ENCODE measurements at regions of chr7 and their contacts with region 1.

Region 1: DNA sequence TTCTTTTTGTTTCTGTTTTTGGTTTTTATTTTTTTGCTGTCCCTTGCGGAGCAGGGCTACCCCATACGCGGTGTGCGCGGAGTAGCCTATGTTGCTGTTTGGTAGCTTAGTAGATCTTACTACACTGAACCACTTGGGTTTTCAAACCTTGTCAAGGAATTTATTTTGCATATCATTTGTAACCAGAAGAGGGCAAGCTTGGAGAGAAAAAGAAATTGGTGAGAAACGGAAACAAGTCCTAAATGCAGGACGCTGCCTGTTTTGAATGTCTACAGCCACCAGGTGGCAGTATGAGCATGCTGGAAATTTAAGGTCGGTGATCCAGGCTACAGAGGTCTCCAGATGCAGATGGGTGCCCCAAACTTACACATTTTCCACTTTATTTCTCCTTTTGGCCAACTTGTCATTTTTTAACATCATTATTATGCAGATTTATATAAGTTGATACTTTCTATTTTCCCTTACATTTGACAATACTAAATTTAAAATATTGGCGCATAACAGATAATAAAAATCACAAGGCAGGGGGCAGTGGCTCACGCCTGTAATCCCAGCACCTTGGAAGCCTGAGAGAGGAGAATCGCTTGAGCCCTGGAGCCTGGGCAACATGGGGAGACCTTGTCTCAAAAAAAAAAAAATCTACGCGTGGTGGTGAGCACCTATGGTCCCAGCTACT is 15.3 kb upstream of the TRA2A start:
- DNase-seq: peak; percentile 83
- H3K4me3 ChIP-seq: no peak overlapping the region
- H3K27ac ChIP-seq: no peak overlapping the region
- H3K4me1 ChIP-seq: no peaks in the 10 kb centered on the region
- H3K27me3 ChIP-seq: no peaks in the 10 kb centered on the region; the same call in 1 of the 2 replicates
- CTCF ChIP-seq: peak; percentile 100
- EP300 ChIP-seq: no peak
- RAD21 ChIP-seq: peak; percentile 97

Region 2: DNA sequence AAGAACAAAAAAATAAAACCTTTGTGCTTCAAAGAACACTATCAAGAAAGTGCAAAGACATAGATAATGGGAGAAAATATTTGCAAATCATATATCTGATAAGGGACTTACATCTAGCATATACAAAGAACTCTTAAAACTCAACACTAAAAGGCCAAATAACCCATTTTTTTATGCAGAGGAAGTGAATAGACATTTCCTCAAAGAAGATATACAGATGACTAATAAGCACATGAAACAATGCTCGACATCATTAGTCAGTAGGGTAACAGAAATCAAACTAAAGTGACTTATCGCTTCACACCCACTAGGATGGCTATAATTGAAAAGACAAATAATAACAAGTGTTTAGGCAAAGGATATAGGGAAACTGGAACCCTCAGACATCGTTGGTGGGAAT is 169.9 kb before region 1 on chr7:
- CTCF ChIA-PET with region 1: no interaction called
- POLR2A ChIA-PET with region 1: no interaction called
- DNase-seq: no peak
- H3K4me3 ChIP-seq: no peak overlapping the region
- H3K27ac ChIP-seq: peak overlapping the region in 1 of 2 experiments; percentile 9; a peak in 1 of 4 replicates
- H3K4me1 ChIP-seq: peaks cover 3 to 27% of the 10 kb centered on the region in 2 experiments; a peak in 3 of 4 replicates
- H3K27me3 ChIP-seq: no peaks in the 10 kb centered on the region
- CTCF ChIP-seq: no peak
- EP300 ChIP-seq: no peak
- RAD21 ChIP-seq: no peak

Region 3: DNA sequence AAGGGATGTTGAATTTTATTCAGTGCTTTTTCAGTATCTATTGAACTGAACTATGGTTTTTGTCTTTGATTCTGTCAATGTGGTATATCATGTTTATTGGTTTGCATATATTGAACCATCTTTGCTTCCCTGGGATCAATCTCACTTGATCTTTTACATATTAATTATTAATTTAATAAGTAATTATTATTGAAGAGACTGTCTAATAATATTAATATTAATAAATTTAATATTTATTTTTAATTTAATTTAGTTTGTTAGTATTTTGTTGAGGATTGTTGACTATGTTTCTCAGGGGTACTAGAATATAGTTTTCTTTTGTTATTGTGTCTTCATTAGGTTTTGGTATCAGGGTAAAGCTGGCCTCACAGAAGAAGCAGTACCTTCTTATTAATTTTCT is 11.3 kb after region 1 on chr7:
- CTCF ChIA-PET with region 1: interaction called, 19 read pairs
- POLR2A ChIA-PET with region 1: no interaction called
- DNase-seq: no peak
- H3K4me3 ChIP-seq: no peak overlapping the region
- H3K27ac ChIP-seq: no peak overlapping the region
- H3K4me1 ChIP-seq: no peaks in the 10 kb centered on the region
- H3K27me3 ChIP-seq: no peaks in the 10 kb centered on the region; the same call in 1 of the 2 replicates
- CTCF ChIP-seq: no peak
- EP300 ChIP-seq: no peak
- RAD21 ChIP-seq: no peak

Region 4: GRCh38 chr7:23586159-23586558 is 39.1 kb after region 1 on chr7:
- CTCF ChIA-PET with region 1: interaction called, 10 read pairs
- POLR2A ChIA-PET with region 1: no interaction called
- DNase-seq: no peak
- H3K4me3 ChIP-seq: no peak overlapping the region
- H3K27ac ChIP-seq: no peak overlapping the region
- H3K4me1 ChIP-seq: no peaks in the 10 kb centered on the region
- H3K27me3 ChIP-seq: no peaks in the 10 kb centered on the region; the same call in 1 of the 2 replicates
- CTCF ChIP-seq: no peak
- EP300 ChIP-seq: no peak
- RAD21 ChIP-seq: no peak

Region 5: GRCh38 chr7:23607130-23607529 is 60.1 kb after region 1 on chr7:
- CTCF ChIA-PET with region 1: no interaction called
- POLR2A ChIA-PET with region 1: no interaction called
- DNase-seq: no peak
- H3K4me3 ChIP-seq: no peak overlapping the region
- H3K27ac ChIP-seq: no peak overlapping the region
- H3K4me1 ChIP-seq: no peaks in the 10 kb centered on the region
- H3K27me3 ChIP-seq: no peaks in the 10 kb centered on the region
- CTCF ChIP-seq: no peak
- EP300 ChIP-seq: no peak
- RAD21 ChIP-seq: no peak

Region 6: DNA sequence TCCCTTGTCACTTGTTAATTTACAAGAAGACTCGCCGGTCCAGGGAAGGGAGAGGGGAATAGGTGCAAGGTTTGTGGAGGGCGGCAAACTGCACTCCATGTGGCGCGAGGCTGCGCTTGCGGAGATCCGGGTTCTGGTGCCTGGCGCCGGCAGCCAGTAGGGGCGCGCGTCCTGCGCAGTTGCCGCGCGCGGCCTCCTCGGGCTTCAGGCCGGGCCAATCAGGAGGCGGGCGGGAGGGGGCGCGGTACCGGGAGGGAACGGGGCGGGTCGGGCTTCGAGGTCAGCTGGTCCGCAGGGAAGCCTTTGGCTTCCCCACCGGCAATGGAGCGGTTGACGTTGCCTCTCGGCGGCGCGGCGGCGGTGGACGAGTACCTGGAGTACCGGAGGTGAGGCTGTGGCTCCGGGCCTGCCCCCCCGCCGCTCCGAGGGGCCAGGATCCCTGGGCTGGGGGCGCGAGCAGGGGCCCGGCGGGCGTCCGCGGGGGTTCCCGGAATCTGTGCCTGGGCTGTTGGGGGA is 132.9 kb after region 1 on chr7 and contains the start of gene FAM221A:
- CTCF ChIA-PET with region 1: interaction called, 12 read pairs
- POLR2A ChIA-PET with region 1: no interaction called
- DNase-seq: peak; percentile 95
- H3K4me3 ChIP-seq: peak within 1 kb of the TSS; percentile 68 to 74
- H3K27ac ChIP-seq: peak within 1 kb of the TSS in 1 of 2 experiments; percentile 84; a peak in 2 of 4 replicates
- H3K4me1 ChIP-seq: peaks cover 0 to 6% of the 10 kb centered on the region in 2 experiments; a peak in 1 of 4 replicates
- H3K27me3 ChIP-seq: no peaks in the 10 kb centered on the region
- CTCF ChIP-seq: peak; percentile 77
- EP300 ChIP-seq: peak in 1 of 2 experiments; percentile 9; a peak in 1 of 4 replicates
- RAD21 ChIP-seq: no peak
- polyA plus RNA-seq, gene FAM221A: 9.7 and 10.5 TPM in 2 replicates

Region 7: DNA sequence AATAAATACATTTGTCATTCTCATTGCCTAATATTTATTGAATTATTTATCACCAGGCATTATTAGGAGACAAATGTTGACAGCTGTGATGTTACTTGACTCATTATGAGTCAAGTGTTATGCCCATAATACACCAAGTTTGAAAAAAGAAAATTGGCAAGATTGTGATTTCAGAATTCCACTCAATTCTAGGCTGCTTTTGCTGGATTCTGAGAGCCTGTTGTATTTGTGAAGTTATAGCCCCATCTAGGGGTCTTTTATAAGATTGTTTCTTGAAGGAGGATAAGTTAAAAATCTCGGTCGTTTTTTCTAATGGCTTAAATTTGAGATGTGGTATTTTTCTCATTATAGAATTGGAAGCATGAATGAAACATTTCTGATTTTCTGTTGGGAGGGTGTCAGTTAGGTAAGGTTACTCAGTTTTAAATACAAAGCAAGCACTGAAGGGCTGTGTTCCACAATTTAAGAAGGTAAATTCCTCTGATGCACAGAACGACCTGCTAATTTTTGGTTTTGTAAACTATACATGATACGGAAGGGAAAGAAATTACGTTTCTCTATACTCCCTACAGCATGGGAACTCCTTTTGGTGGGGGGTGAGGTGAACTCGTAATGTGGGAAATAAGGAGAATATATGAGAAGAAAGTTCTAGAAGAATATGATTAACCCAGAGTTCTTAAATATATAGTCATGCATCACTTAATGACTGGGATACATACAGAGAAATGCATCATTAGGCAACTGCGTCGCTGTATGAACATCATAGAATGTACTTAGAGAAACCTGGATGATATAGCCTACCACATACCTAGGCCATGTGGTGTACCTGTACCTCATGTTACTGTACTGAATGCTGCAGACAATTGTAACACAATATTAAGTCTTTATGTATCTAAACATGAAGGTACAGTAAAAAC is 165.6 kb after region 1 on chr7:
- CTCF ChIA-PET with region 1: interaction called, 90 read pairs
- POLR2A ChIA-PET with region 1: no interaction called
- DNase-seq: peak; percentile 79
- H3K4me3 ChIP-seq: no peak overlapping the region
- H3K27ac ChIP-seq: no peak overlapping the region
- H3K4me1 ChIP-seq: peaks cover 3 to 14% of the 10 kb centered on the region in 2 experiments; a peak in 2 of 4 replicates
- H3K27me3 ChIP-seq: no peaks in the 10 kb centered on the region
- CTCF ChIP-seq: peak; percentile 89
- EP300 ChIP-seq: no peak
- RAD21 ChIP-seq: peak; percentile 99

Measured in SK-N-SH (cell line).